T-cell (primary cell): ENCODE measurements at regions of chr2 and their contacts with region 1.

Region 1: DNA sequence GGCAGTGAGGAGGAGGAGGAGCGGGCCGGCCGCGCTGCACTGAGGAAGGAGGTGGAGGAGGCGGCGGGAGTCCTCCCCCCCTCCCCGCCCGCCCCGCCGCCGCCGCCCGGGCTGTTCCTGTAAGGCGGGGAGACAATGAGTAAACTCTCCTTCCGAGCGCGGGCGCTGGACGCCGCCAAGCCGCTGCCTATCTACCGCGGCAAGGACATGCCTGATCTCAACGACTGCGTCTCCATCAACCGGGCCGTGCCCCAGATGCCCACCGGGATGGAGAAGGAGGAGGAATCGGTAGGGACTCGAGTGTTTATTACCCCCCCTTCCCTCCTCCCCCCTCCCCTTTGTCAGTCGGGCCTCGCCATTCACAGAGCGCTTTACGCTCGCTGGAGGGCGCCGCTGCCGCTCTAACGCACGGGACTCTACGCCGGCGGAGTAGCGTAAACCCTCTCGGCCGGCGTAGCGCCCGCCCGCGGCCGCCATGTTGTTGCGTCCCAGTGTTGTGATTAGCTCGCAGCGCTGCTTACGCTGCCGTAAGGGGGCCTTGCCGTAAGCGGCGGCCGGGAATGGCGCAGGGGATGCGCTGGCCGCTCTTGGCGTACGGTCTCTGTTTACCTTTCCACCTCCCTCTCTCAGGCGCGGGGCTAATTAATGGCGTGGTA is 460 bp downstream of the EPC2 start:
- DNase-seq: peak; percentile 88 to 98 (median 93)
- ATAC-seq: peak; percentile 69 to 83 (median 76)
- H3K4me3 ChIP-seq: peak overlapping the region; percentile 88 to 89
- H3K4me3 Mint-ChIP-seq: peak overlapping the region; percentile 85 to 96 (median 93)
- H3K27ac ChIP-seq: peak overlapping the region; percentile 96
- H3K27ac Mint-ChIP-seq: peak overlapping the region; percentile 92 to 97
- H3K4me1 ChIP-seq: peaks cover 10 to 22% of the 10 kb centered on the region in 2 experiments
- H3K4me1 Mint-ChIP-seq: peaks cover 44 to 48% (median 44%) of the 10 kb centered on the region in 3 donors
- H3K27me3 ChIP-seq: no peaks in the 10 kb centered on the region
- H3K27me3 Mint-ChIP-seq: no peaks in the 10 kb centered on the region

Region 2: DNA sequence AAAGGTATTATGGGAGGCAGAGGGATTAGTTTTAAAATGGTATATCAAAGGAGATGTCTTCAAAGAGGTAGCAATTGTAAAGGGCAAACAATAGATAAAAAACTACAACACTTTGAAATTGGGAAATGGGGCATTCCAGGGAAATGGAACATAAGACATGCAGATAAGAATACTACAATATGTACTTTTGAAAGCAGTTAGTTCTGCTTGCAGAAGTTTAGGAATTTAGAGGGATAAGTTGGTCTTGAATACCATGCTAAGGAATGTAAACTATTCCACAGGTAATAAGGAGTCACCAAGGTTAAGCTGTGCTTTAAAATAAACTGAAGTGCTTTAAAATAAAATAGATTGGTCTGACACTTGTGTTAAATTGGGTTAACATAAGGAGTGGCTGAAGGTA is 1371.9 kb before region 1 on chr2:
- CTCF ChIA-PET with region 1: no interaction called
- POLR2A ChIA-PET with region 1: no interaction called
- DNase-seq: no peak
- ATAC-seq: no peak
- H3K4me3 ChIP-seq: no peak overlapping the region
- H3K4me3 Mint-ChIP-seq: no peak overlapping the region
- H3K27ac ChIP-seq: no peak overlapping the region
- H3K27ac Mint-ChIP-seq: no peak overlapping the region
- H3K4me1 ChIP-seq: no peaks in the 10 kb centered on the region
- H3K4me1 Mint-ChIP-seq: peaks cover 0 to 2% (median 1%) of the 10 kb centered on the region in 3 donors
- H3K27me3 ChIP-seq: no peaks in the 10 kb centered on the region
- H3K27me3 Mint-ChIP-seq: no peaks in the 10 kb centered on the region

Region 3: GRCh38 chr2:148020111-148021058 is 624.6 kb before region 1 on chr2 and contains the start of gene ORC4:
- CTCF ChIA-PET with region 1: interaction called in 1 of 2 experiments, 18 read pairs
- POLR2A ChIA-PET with region 1: interaction called in 1 of 2 experiments, 13 read pairs
- DNase-seq: peak; percentile 89 to 99 (median 94)
- ATAC-seq: peak; percentile 90 to 93 (median 92)
- H3K4me3 ChIP-seq: peak within 1 kb of the TSS; percentile 83 to 95
- H3K4me3 Mint-ChIP-seq: peak within 1 kb of the TSS; percentile 96 to 99 (median 99)
- H3K27ac ChIP-seq: peak within 1 kb of the TSS; percentile 96
- H3K27ac Mint-ChIP-seq: peak within 1 kb of the TSS; percentile 96 to 98
- H3K4me1 ChIP-seq: peaks cover 16 to 27% of the 10 kb centered on the region in 2 experiments
- H3K4me1 Mint-ChIP-seq: peaks cover 68 to 75% (median 72%) of the 10 kb centered on the region in 3 donors
- H3K27me3 ChIP-seq: no peaks in the 10 kb centered on the region
- H3K27me3 Mint-ChIP-seq: no peaks in the 10 kb centered on the region
- total RNA-seq, gene ORC4: 40.3 to 46.8 (median 42.1) TPM

Region 4: DNA sequence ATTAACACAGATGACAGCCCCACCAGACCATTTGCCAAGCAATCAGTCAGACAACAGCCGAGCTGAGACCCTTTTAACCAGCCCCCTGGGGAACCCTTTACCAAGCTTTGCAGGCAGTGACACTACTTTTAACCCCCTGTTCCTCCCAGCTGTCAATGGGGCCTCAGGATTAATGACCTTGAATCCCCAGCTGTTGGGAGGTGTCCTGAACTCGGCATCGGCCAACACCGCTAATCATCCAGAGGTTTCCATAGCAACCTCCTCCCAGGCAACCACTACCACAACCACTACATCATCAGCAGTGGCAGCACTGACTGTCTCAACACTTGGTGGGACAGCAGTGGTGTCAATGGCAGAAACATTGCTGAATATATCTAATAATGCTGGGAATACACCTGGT is 161.3 kb before region 1 on chr2:
- CTCF ChIA-PET with region 1: no interaction called
- POLR2A ChIA-PET with region 1: no interaction called
- DNase-seq: no peak
- ATAC-seq: no peak
- H3K4me3 ChIP-seq: no peak overlapping the region
- H3K4me3 Mint-ChIP-seq: no peak overlapping the region
- H3K27ac ChIP-seq: no peak overlapping the region
- H3K27ac Mint-ChIP-seq: no peak overlapping the region
- H3K4me1 ChIP-seq: no peaks in the 10 kb centered on the region
- H3K4me1 Mint-ChIP-seq: peaks cover 0 to 5% (median 0%) of the 10 kb centered on the region in 3 donors
- H3K27me3 ChIP-seq: no peaks in the 10 kb centered on the region
- H3K27me3 Mint-ChIP-seq: no peaks in the 10 kb centered on the region

Region 5: DNA sequence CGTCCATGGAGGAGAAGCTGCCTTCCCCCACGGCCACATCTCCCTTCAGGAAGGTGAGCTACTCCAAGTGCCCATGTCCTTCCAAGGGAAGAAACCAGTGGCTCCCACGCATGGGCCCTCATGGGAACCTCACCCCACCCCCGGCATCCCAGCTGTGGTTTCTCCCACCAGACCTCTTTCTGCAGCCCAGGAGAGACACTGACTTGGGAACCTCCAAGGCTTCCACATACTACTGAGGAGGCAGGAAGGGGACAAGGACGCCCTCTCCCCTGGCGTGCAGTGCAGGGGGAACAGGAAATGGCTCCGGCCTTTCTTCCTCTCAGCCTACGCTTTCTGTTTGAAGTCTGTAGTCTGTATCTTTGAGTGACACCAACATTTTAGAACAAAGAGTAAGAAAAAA is 105.0 kb before region 1 on chr2:
- CTCF ChIA-PET with region 1: interaction called in 1 of 2 experiments, 4 read pairs
- POLR2A ChIA-PET with region 1: interaction called in 1 of 2 experiments, 10 read pairs
- DNase-seq: peak in 5 of 35 experiments; percentile 11 to 44 (median 26)
- ATAC-seq: peak; percentile 69 to 90 (median 84)
- H3K4me3 ChIP-seq: no peak overlapping the region
- H3K4me3 Mint-ChIP-seq: peak overlapping the region; percentile 7 to 76 (median 57)
- H3K27ac ChIP-seq: peak overlapping the region; percentile 32
- H3K27ac Mint-ChIP-seq: peak overlapping the region; percentile 66 to 93
- H3K4me1 ChIP-seq: peaks cover 23 to 30% of the 10 kb centered on the region in 2 experiments
- H3K4me1 Mint-ChIP-seq: peaks cover 49 to 52% (median 50%) of the 10 kb centered on the region in 3 donors
- H3K27me3 ChIP-seq: no peaks in the 10 kb centered on the region
- H3K27me3 Mint-ChIP-seq: no peaks in the 10 kb centered on the region

Region 6: DNA sequence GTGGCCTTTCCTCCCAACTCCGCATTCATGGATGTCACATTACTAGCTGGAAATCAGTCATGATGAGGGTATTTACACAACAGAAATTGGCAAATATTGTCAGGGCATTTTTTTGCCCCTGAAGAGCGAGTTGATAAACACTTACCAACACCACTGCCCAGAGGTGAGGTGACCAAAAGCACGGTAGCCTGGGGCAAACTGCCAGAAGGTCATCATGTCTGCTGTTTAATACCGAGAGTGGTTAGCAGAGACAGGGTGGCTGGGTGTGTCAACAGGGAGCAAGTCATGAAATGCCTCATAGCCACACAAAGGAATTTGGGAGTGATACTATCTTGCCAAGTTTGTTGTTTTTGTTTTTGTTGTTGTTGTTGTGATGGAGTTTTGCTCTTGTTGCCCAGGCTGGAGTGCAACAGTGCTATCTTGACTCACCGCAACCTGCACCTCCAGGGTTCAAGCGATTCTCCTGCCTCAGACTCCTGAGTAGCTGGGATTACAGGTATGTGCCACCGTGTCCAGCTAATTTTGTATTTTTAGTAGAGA is 37.4 kb before region 1 on chr2:
- CTCF ChIA-PET with region 1: no interaction called
- POLR2A ChIA-PET with region 1: interaction called in 1 of 2 experiments, 13 read pairs
- DNase-seq: no peak
- ATAC-seq: no peak
- H3K4me3 ChIP-seq: no peak overlapping the region
- H3K4me3 Mint-ChIP-seq: no peak overlapping the region
- H3K27ac ChIP-seq: no peak overlapping the region
- H3K27ac Mint-ChIP-seq: no peak overlapping the region
- H3K4me1 ChIP-seq: no peaks in the 10 kb centered on the region
- H3K4me1 Mint-ChIP-seq: no peaks in the 10 kb centered on the region
- H3K27me3 ChIP-seq: no peaks in the 10 kb centered on the region
- H3K27me3 Mint-ChIP-seq: no peaks in the 10 kb centered on the region

Region 7: GRCh38 chr2:148674063-148675020 is 29.3 kb after region 1 on chr2:
- CTCF ChIA-PET with region 1: interaction called in 1 of 2 experiments, 11 read pairs
- POLR2A ChIA-PET with region 1: no interaction called
- DNase-seq: peak in 15 of 35 experiments; percentile 3 to 65 (median 25)
- ATAC-seq: peak; percentile 35 to 64 (median 60)
- H3K4me3 ChIP-seq: no peak overlapping the region
- H3K4me3 Mint-ChIP-seq: peak overlapping the region in 1 of 3 donors; percentile 7
- H3K27ac ChIP-seq: no peak overlapping the region
- H3K27ac Mint-ChIP-seq: peak overlapping the region; percentile 41 to 60
- H3K4me1 ChIP-seq: peaks cover 7 to 22% of the 10 kb centered on the region in 2 experiments
- H3K4me1 Mint-ChIP-seq: peaks cover 78 to 86% (median 82%) of the 10 kb centered on the region in 3 donors
- H3K27me3 ChIP-seq: no peaks in the 10 kb centered on the region
- H3K27me3 Mint-ChIP-seq: no peaks in the 10 kb centered on the region

Region 8: GRCh38 chr2:148948868-148949267 is 303.9 kb after region 1 on chr2:
- CTCF ChIA-PET with region 1: no interaction called
- POLR2A ChIA-PET with region 1: no interaction called
- DNase-seq: no peak
- ATAC-seq: no peak
- H3K4me3 ChIP-seq: no peak overlapping the region
- H3K4me3 Mint-ChIP-seq: no peak overlapping the region
- H3K27ac ChIP-seq: no peak overlapping the region
- H3K27ac Mint-ChIP-seq: no peak overlapping the region
- H3K4me1 ChIP-seq: no peaks in the 10 kb centered on the region
- H3K4me1 Mint-ChIP-seq: no peaks in the 10 kb centered on the region
- H3K27me3 ChIP-seq: no peaks in the 10 kb centered on the region
- H3K27me3 Mint-ChIP-seq: no peaks in the 10 kb centered on the region